Naive thymus-derived CD4-positive, alpha-beta T cell (primary cell): ENCODE measurements at regions of chr12 and their contacts with region 1.

Region 1: GRCh38 chr12:107131832-107132616 is 38.7 kb upstream of the CRY1 start:
- DNase-seq: peak in 6 of 9 donors; percentile 5 to 56 (median 42)
- ATAC-seq: peak; percentile 59
- H3K4me3 ChIP-seq: no peak overlapping the region
- H3K4me3 Mint-ChIP-seq: no peak overlapping the region
- H3K27ac ChIP-seq: no peak overlapping the region
- H3K27ac Mint-ChIP-seq: peak overlapping the region in 2 of 9 donors; percentile 12 to 46
- H3K4me1 ChIP-seq: no peaks in the 10 kb centered on the region
- H3K4me1 Mint-ChIP-seq: peaks cover 0 to 5% (median 0%) of the 10 kb centered on the region in 7 donors
- H3K27me3 ChIP-seq: no peaks in the 10 kb centered on the region
- H3K27me3 Mint-ChIP-seq: peaks cover 0 to 1% (median 0%) of the 10 kb centered on the region in 5 donors

Region 2: GRCh38 chr12:107607464-107608392 is 475.7 kb after region 1 on chr12:
- CTCF ChIA-PET with region 1: interaction called, 150 read pairs
- POLR2A ChIA-PET with region 1: interaction called, 4 read pairs
- intact Hi-C with region 1: loop called (anchors 1 kb)
- DNase-seq: peak; percentile 55 to 82 (median 71)
- ATAC-seq: peak; percentile 78
- H3K4me3 ChIP-seq: no peak overlapping the region
- H3K4me3 Mint-ChIP-seq: no peak overlapping the region
- H3K27ac ChIP-seq: no peak overlapping the region
- H3K27ac Mint-ChIP-seq: peak overlapping the region in 2 of 9 donors; percentile 9 to 25
- H3K4me1 ChIP-seq: no peaks in the 10 kb centered on the region
- H3K4me1 Mint-ChIP-seq: no peaks in the 10 kb centered on the region
- H3K27me3 ChIP-seq: no peaks in the 10 kb centered on the region
- H3K27me3 Mint-ChIP-seq: no peaks in the 10 kb centered on the region

Region 3: GRCh38 chr12:107884769-107885694 is 753.0 kb after region 1 on chr12:
- CTCF ChIA-PET with region 1: no interaction called
- POLR2A ChIA-PET with region 1: no interaction called
- intact Hi-C with region 1: loop called (anchors 5 kb)
- DNase-seq: peak in 5 of 9 donors; percentile 5 to 29 (median 13)
- ATAC-seq: peak; percentile 60
- H3K4me3 ChIP-seq: no peak overlapping the region
- H3K4me3 Mint-ChIP-seq: no peak overlapping the region
- H3K27ac ChIP-seq: no peak overlapping the region
- H3K27ac Mint-ChIP-seq: no peak overlapping the region
- H3K4me1 ChIP-seq: no peaks in the 10 kb centered on the region
- H3K4me1 Mint-ChIP-seq: no peaks in the 10 kb centered on the region
- H3K27me3 ChIP-seq: no peaks in the 10 kb centered on the region
- H3K27me3 Mint-ChIP-seq: peaks cover 7 to 21% (median 13%) of the 10 kb centered on the region in 5 donors

Region 4: GRCh38 chr12:108193917-108194316 is 1061.9 kb after region 1 on chr12:
- CTCF ChIA-PET with region 1: no interaction called
- POLR2A ChIA-PET with region 1: no interaction called
- intact Hi-C with region 1: loop called in 1 of 2 experiments (anchors 5 kb)
- DNase-seq: peak in 2 of 9 donors; percentile 3 to 7
- ATAC-seq: no peak
- H3K4me3 ChIP-seq: no peak overlapping the region
- H3K4me3 Mint-ChIP-seq: no peak overlapping the region
- H3K27ac ChIP-seq: no peak overlapping the region
- H3K27ac Mint-ChIP-seq: no peak overlapping the region
- H3K4me1 ChIP-seq: no peaks in the 10 kb centered on the region
- H3K4me1 Mint-ChIP-seq: peaks cover 0 to 2% (median 0%) of the 10 kb centered on the region in 7 donors
- H3K27me3 ChIP-seq: no peaks in the 10 kb centered on the region
- H3K27me3 Mint-ChIP-seq: peaks cover 0 to 58% (median 35%) of the 10 kb centered on the region in 5 donors